Naive thymus-derived CD4-positive, alpha-beta T cell (primary cell): ENCODE measurements at regions of chr3 and their contacts with region 1.

Region 1: DNA sequence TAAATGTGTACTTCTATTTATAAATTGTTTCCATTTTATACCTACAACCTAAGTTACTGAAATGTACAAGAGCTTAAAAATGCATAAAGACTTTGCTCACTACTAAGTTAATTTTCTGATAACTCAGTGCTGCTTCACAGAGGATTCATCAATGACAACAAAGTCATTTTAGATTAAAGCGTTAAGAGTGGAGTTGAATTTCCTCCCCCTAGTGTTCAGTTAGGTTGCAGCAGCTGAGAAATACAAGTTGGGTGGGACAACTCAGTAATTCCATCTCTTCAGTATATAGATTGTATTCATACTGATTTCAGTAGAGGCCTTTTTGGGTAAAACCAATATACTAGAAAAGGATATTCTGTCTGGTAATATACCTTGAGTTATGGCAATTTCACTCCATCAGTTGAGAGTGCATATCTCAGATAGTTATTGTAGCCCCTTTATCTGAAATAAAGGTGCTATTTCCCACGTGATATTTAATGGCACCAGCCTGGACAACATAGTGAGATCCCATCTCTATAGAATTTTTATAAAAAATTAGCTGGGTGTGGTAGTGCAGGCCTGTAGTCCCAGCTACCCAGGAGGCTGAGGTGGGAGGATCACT is 6.9 kb upstream of the RPL35A start:
- DNase-seq: peak in 7 of 9 donors; percentile 24 to 63 (median 48)
- ATAC-seq: peak; percentile 82
- H3K4me3 ChIP-seq: no peak overlapping the region
- H3K4me3 Mint-ChIP-seq: no peak overlapping the region
- H3K27ac ChIP-seq: no peak overlapping the region
- H3K27ac Mint-ChIP-seq: no peak overlapping the region
- H3K4me1 ChIP-seq: no peaks in the 10 kb centered on the region
- H3K4me1 Mint-ChIP-seq: peaks cover 0 to 8% (median 0%) of the 10 kb centered on the region in 7 donors
- H3K27me3 ChIP-seq: no peaks in the 10 kb centered on the region
- H3K27me3 Mint-ChIP-seq: peaks cover 0 to 2% (median 0%) of the 10 kb centered on the region in 5 donors

Region 2: GRCh38 chr3:197906023-197906849 is 36.8 kb before region 1 on chr3:
- CTCF ChIA-PET with region 1: interaction called, 5 read pairs
- POLR2A ChIA-PET with region 1: no interaction called
- intact Hi-C with region 1: loop called (anchors 1 kb)
- DNase-seq: peak; percentile 38 to 79 (median 62)
- ATAC-seq: peak; percentile 91
- H3K4me3 ChIP-seq: no peak overlapping the region
- H3K4me3 Mint-ChIP-seq: peak overlapping the region in 2 of 10 donors; percentile 4 to 58
- H3K27ac ChIP-seq: no peak overlapping the region
- H3K27ac Mint-ChIP-seq: peak overlapping the region in 1 of 9 donors; percentile 15
- H3K4me1 ChIP-seq: peaks cover 0 to 6% of the 10 kb centered on the region in 2 donors
- H3K4me1 Mint-ChIP-seq: peaks cover 0 to 10% (median 3%) of the 10 kb centered on the region in 7 donors
- H3K27me3 ChIP-seq: no peaks in the 10 kb centered on the region
- H3K27me3 Mint-ChIP-seq: peaks cover 0 to 4% (median 0%) of the 10 kb centered on the region in 5 donors